ENCODE measurements at regions of chr14 and their contacts with region 1.

Region 1: GRCh38 chr14:21213652-21214051 is 55.6 kb downstream of the HNRNPC start:
- DNase-seq: no peak
- H3K4me3 ChIP-seq: no peak overlapping the region
- H3K27ac ChIP-seq: no peak overlapping the region
- H3K4me1 ChIP-seq: no peaks in the 10 kb centered on the region
- H3K27me3 ChIP-seq: no peaks in the 10 kb centered on the region
- CTCF ChIP-seq: no peak
- POLR2A ChIP-seq: no peak

Region 2: GRCh38 chr14:21267886-21268616 is 54.4 kb after region 1 on chr14:
- intact Hi-C with region 1: loop called (anchors 2 kb)
- DNase-seq: no peak
- H3K4me3 ChIP-seq: peak overlapping the region; percentile 70 to 97 (median 74)
- H3K27ac ChIP-seq: peak overlapping the region; percentile 94 to 100
- H3K4me1 ChIP-seq: peaks cover 0 to 21% of the 10 kb centered on the region in 2 donors
- H3K27me3 ChIP-seq: no peaks in the 10 kb centered on the region
- CTCF ChIP-seq: no peak
- POLR2A ChIP-seq: no peak

Region 3: DNA sequence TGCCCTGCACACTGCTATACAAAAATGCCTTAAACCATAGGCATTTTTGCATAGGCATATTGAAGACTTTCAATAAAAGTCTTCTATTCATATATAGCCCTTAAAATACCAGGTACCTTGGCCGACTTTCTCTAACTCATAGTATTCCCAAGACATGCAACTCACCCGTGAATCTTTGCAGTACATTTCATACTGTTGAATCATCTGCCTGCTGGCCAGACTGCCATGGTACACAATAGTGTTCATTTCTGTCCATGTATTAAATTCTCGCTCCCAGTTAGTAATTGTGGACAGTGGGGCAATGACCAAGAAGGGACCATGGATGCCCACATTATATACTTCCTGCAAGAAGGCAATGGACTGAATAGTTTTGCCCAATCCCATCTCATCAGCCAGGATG is 194.5 kb after region 1 on chr14:
- intact Hi-C with region 1: no loop called
- DNase-seq: no peak
- H3K4me3 ChIP-seq: no peak overlapping the region
- H3K27ac ChIP-seq: no peak overlapping the region
- H3K4me1 ChIP-seq: no peaks in the 10 kb centered on the region
- H3K27me3 ChIP-seq: no peaks in the 10 kb centered on the region
- CTCF ChIP-seq: no peak
- POLR2A ChIP-seq: no peak